Kidney (tissue), 22 donors: ENCODE measurements at regions of chr3 and their contacts with region 1.

Region 1: DNA sequence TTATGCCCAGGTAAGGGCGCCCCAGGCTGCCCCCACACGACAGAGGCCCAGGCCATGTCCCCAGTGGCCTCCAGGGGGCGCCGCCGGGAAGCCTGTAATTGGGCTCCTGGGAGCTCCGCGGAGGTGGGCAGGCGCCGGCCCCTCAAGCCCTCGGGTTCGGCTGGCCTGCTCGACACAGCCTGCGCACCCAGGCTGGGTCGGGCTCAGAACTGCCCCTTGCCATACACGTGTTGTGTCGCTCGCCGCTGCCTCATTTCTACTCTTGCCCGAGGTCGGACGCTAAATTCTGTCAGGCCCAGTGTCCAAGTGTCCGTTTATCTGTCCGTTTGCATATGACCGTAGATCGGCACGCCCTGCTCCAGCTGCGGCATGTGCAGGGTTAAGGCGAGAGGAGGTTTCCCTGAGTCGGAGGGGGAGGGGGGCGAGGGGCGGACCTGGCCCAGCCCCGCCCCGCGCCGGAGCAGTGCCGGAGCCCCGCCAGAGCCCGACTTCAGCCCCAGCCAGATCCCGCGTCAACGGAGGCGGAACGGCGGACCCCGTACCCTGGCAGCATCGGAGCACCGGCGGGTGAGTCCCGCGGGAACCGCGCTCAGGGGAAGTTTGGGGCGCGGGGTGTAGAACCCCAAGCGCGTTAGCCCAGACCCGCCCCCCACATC is at the start of gene KLHDC8B:
- DNase-seq: peak; percentile 90 to 95 (median 94)
- H3K4me3 ChIP-seq: peak within 1 kb of the TSS; percentile 83 to 89 (median 85)
- H3K27ac ChIP-seq: peak within 1 kb of the TSS; percentile 74 to 88
- H3K4me1 ChIP-seq: peaks cover 0 to 40% (median 38%) of the 10 kb centered on the region in 3 donors
- H3K27me3 ChIP-seq: no peaks in the 10 kb centered on the region
- CTCF ChIP-seq: peak; percentile 75
- total RNA-seq, gene KLHDC8B: 23.4 TPM

Region 2: GRCh38 chr3:47996440-47996839 is 1174.8 kb before region 1 on chr3:
- intact Hi-C with region 1: no loop called
- DNase-seq: no peak
- H3K4me3 ChIP-seq: no peak overlapping the region
- H3K27ac ChIP-seq: no peak overlapping the region
- H3K4me1 ChIP-seq: no peaks in the 10 kb centered on the region
- H3K27me3 ChIP-seq: no peaks in the 10 kb centered on the region
- CTCF ChIP-seq: no peak

Region 3: DNA sequence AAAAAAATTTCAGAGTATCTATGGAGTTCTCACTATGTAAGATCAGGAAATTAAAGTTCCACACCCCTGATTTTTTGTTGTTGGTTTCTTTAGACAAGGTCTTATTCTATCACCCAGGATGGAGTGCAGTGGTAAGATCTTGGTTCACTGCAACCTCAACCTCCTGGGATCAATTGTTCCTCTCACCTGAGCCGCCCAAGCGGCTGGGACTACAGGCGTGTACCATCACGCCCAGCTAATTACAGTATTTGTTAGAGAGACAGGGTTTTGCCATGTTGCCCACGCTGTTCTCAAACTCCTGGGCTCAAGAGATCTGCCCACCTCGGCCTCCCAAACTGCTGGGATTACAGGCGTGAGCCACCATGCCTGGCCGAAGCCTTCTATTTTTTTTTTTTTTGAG is 89.8 kb before region 1 on chr3:
- intact Hi-C with region 1: no loop called
- DNase-seq: no peak
- H3K4me3 ChIP-seq: no peak overlapping the region
- H3K27ac ChIP-seq: no peak overlapping the region
- H3K4me1 ChIP-seq: no peaks in the 10 kb centered on the region
- H3K27me3 ChIP-seq: no peaks in the 10 kb centered on the region
- CTCF ChIP-seq: no peak

Region 4: GRCh38 chr3:49283997-49284396 is 112.8 kb after region 1 on chr3:
- intact Hi-C with region 1: loop called (anchors 10 kb)
- DNase-seq: no peak
- H3K4me3 ChIP-seq: no peak overlapping the region
- H3K27ac ChIP-seq: no peak overlapping the region
- H3K4me1 ChIP-seq: no peaks in the 10 kb centered on the region
- H3K27me3 ChIP-seq: no peaks in the 10 kb centered on the region
- CTCF ChIP-seq: no peak